HCT116 (cell line): ENCODE measurements at regions of chr17 and their contacts with region 1.

Region 1: DNA sequence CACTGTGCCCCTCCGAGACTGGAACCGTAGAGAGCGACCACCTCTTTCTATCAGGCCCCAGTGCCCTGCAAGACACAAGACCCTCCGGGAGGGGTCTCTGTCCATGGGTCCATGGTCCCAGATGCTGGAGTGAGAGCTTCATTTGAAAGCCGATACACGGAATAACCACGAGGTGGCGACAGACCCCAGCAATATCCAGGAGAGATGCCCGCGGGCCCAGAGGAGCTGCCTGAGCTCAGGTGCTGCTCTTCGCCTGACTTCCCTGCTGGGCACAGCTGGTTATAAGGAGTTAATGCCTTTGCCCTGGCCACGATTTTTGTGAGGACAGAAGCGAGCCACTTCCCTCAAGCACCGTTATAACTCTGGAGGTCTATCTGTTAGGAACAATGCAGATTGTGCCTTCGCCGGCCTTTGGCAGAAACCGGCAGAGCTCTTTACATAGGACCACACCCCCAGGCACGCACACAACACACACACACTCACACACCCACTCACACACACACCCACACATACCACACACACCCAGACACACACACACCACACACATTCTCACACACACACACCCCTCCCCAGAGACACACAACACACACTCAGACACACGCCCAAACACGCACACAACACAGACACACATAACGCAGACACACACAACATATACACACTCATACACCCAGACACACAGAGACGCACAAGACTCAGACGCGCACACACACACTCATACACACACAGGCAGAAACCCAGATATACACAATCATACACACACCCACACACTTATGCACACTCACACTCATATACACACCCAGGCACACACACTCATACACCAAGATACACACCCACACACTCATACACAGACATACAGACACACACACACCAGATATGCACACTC is 436.4 kb downstream of the SOX9 start:
- DNase-seq: peak; percentile 83
- ATAC-seq: peak; percentile 80
- H3K4me3 ChIP-seq: no peak overlapping the region
- H3K27ac ChIP-seq: peak overlapping the region; percentile 3; the same call in 1 of the 2 replicates
- H3K4me1 ChIP-seq: peaks cover 3 to 44% of the 10 kb centered on the region in 2 experiments; a peak in 3 of 4 replicates
- H3K27me3 ChIP-seq: no peaks in the 10 kb centered on the region
- CTCF ChIP-seq: peak; percentile 91 to 100 (median 99)
- POLR2A ChIP-seq: no peak
- RAD21 ChIP-seq: peak; percentile 99

Region 2: GRCh38 chr17:70767102-70767701 is 1790.0 kb before region 1 on chr17:
- CTCF ChIA-PET with region 1: interaction called, 10 read pairs
- POLR2A ChIA-PET with region 1: no interaction called
- RAD21 ChIA-PET with region 1: no interaction called
- intact Hi-C with region 1: no loop called
- DNase-seq: peak; percentile 42
- ATAC-seq: peak; percentile 42; the same call in 1 of the 2 replicates
- H3K4me3 ChIP-seq: no peak overlapping the region
- H3K27ac ChIP-seq: no peak overlapping the region
- H3K4me1 ChIP-seq: no peaks in the 10 kb centered on the region
- H3K27me3 ChIP-seq: no peaks in the 10 kb centered on the region
- CTCF ChIP-seq: peak; percentile 72 to 95 (median 76); a peak in 5 of 6 replicates
- POLR2A ChIP-seq: no peak
- RAD21 ChIP-seq: peak; percentile 91

Region 3: GRCh38 chr17:72592242-72592966 is 35.2 kb after region 1 on chr17:
- CTCF ChIA-PET with region 1: interaction called, 42 read pairs
- POLR2A ChIA-PET with region 1: interaction called, 11 read pairs
- RAD21 ChIA-PET with region 1: interaction called, 4 read pairs
- intact Hi-C with region 1: loop called (anchors 1 kb)
- DNase-seq: peak; percentile 86
- ATAC-seq: peak; percentile 76
- H3K4me3 ChIP-seq: peak overlapping the region; percentile 81 to 87
- H3K27ac ChIP-seq: peak overlapping the region; percentile 69
- H3K4me1 ChIP-seq: peaks cover 38 to 64% of the 10 kb centered on the region in 2 experiments
- H3K27me3 ChIP-seq: no peaks in the 10 kb centered on the region
- CTCF ChIP-seq: 0 out of 6 replicates have a peak, but pooled peaks of 1 of the 3 experiments have one; percentile 0
- POLR2A ChIP-seq: peak; percentile 99
- RAD21 ChIP-seq: no peak

Region 4: DNA sequence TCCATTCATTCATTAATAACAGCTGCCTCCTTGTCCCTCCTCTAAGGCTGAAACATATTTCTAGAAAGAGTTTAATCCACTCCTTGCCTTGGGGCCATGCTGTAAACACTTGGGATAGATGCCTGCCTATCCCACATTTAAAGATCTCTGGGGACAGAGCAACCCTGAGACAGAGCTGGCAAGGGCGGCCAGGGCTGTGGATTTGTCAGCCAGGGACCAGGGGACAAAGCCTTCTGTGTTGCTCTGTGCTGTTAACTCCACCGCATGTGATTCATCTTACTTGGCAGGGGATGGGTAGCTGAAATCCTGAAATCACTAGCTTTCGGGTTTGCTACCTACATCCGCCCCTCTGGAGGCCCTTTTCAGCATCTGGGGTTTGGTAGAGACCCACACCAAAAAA is 142.4 kb after region 1 on chr17:
- CTCF ChIA-PET with region 1: interaction called, 19 read pairs
- POLR2A ChIA-PET with region 1: no interaction called
- RAD21 ChIA-PET with region 1: interaction called in 1 of 2 experiments, 4 read pairs
- intact Hi-C with region 1: no loop called
- DNase-seq: no peak
- ATAC-seq: peak; percentile 33; the same call in 1 of the 2 replicates
- H3K4me3 ChIP-seq: no peak overlapping the region
- H3K27ac ChIP-seq: no peak overlapping the region
- H3K4me1 ChIP-seq: peaks cover 21 to 54% of the 10 kb centered on the region in 2 experiments
- H3K27me3 ChIP-seq: no peaks in the 10 kb centered on the region
- CTCF ChIP-seq: no peak
- POLR2A ChIP-seq: no peak
- RAD21 ChIP-seq: no peak

Region 5: DNA sequence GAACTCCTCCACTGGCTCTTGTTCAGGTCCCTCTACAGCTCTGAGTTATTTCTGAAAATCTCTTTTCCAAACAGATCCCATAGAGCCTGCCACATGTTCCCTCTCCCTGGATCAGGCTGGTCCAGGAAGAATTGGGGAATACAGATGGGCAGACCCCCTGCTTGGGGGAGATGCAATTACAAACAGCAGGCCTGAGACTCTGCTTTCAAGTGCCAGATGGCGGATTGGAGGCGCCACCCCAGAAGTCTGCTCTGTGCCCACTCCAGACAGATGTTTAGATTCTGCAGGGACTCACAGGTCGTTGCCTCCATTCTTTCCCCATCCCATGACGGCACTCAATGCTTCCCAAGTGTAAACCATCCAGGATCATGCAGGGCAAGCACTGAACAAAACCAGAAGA is 218.7 kb after region 1 on chr17:
- CTCF ChIA-PET with region 1: no interaction called
- POLR2A ChIA-PET with region 1: no interaction called
- RAD21 ChIA-PET with region 1: no interaction called
- intact Hi-C with region 1: no loop called
- DNase-seq: no peak
- ATAC-seq: no peak
- H3K4me3 ChIP-seq: no peak overlapping the region
- H3K27ac ChIP-seq: no peak overlapping the region
- H3K4me1 ChIP-seq: no peaks in the 10 kb centered on the region
- H3K27me3 ChIP-seq: no peaks in the 10 kb centered on the region
- CTCF ChIP-seq: no peak
- POLR2A ChIP-seq: no peak
- RAD21 ChIP-seq: no peak

Region 6: DNA sequence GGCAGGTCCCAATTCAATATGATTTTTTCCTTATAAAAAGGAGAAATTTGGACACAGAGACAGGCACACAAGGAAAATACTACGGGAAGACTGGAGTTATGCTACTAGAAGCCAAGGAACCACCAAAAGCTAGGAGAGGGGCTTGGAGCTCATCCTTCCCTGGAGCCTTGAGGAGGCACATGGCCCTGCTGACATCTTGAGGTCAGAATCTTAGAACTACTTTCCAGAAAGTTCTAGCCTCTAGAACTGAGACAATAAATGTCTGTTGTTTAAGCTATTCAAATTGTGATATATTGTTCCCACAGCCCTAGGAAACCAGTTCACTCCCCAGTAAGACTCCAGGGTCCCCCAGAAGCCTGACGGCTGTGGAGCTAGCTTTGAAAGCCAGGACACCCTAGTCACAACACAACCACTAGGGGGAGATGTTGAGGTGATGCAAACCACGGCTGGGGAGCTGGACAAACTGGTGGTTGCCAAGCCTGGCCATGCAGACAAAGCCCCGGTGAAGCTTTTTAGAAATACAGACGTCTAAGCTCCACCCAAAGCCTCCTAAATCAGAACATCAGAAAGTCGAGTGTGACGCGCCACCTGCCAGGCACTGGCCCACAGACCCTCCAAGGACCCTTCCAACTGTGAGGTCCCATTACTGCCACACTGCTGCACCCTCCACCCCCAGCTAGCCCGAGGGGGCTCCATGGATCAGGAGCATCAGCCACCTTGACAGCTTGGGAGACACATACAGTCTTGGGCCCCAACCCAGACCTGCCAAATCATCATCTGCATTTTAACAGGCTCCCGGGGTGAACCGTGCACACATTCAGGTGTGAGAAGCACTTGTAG is 428.9 kb after region 1 on chr17:
- CTCF ChIA-PET with region 1: interaction called, 16 read pairs
- POLR2A ChIA-PET with region 1: no interaction called
- RAD21 ChIA-PET with region 1: interaction called, 3 to 4 read pairs
- intact Hi-C with region 1: loop called (anchors 10 kb)
- DNase-seq: peak; percentile 70
- ATAC-seq: peak; percentile 74
- H3K4me3 ChIP-seq: no peak overlapping the region
- H3K27ac ChIP-seq: peak overlapping the region; percentile 77; the same call in 1 of the 2 replicates
- H3K4me1 ChIP-seq: peaks cover 31 to 38% of the 10 kb centered on the region in 2 experiments
- H3K27me3 ChIP-seq: no peaks in the 10 kb centered on the region
- CTCF ChIP-seq: peak; percentile 80 to 99 (median 99)
- POLR2A ChIP-seq: no peak
- RAD21 ChIP-seq: peak; percentile 79

Region 7: GRCh38 chr17:73247726-73248125 is 690.5 kb after region 1 on chr17:
- CTCF ChIA-PET with region 1: interaction called, 10 read pairs
- POLR2A ChIA-PET with region 1: no interaction called
- RAD21 ChIA-PET with region 1: no interaction called
- intact Hi-C with region 1: no loop called
- DNase-seq: no peak
- ATAC-seq: peak; percentile 20; the same call in 1 of the 2 replicates
- H3K4me3 ChIP-seq: no peak overlapping the region
- H3K27ac ChIP-seq: no peak overlapping the region
- H3K4me1 ChIP-seq: no peaks in the 10 kb centered on the region
- H3K27me3 ChIP-seq: no peaks in the 10 kb centered on the region
- CTCF ChIP-seq: peak in 2 of 3 experiments; percentile 32 to 39; a peak in 2 of 6 replicates
- POLR2A ChIP-seq: no peak
- RAD21 ChIP-seq: peak; percentile 53; the same call in 1 of the 2 replicates